Naive thymus-derived CD4-positive, alpha-beta T cell (primary cell): ENCODE measurements at regions of chr1 and their contacts with region 1.

Region 1: DNA sequence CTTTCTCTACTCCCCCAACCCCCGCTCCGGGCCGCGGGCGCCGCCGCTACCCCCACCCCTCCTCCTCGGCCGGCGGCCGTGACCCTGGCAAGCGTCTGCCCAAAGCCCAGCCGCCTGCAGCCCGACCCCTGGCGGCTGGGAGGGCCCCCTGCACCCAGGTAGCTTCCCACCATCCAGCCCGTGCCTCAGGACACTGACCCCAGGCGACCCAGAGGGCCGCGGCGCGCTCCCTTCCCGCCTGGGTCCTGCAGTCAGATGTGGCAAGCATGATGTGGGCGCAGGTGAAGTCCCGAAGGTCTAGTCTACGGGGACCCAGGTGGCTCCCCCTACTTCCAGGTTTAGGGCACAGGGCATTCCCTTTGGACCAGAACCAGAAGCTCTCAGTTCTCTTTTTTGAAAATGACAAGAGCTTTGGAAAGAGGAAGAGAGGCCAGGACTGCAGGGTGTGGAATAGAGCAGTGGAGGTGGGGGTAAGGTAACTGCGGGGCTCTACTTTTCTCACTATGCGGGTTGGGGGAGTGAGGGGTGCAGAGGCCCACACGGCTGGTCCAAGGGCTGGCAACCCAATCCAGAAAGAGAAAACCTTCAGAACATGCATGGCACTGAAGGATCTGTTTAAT is at the start of gene DENND4B:
- DNase-seq: peak; percentile 55 to 85 (median 68)
- ATAC-seq: peak; percentile 75
- H3K4me3 ChIP-seq: peak within 1 kb of the TSS; percentile 94
- H3K4me3 Mint-ChIP-seq: peak within 1 kb of the TSS; percentile 93 to 99 (median 96)
- H3K27ac ChIP-seq: peak within 1 kb of the TSS; percentile 89
- H3K27ac Mint-ChIP-seq: peak within 1 kb of the TSS; percentile 90 to 98 (median 96)
- H3K4me1 ChIP-seq: peaks cover 23 to 25% of the 10 kb centered on the region in 2 donors
- H3K4me1 Mint-ChIP-seq: peaks cover 20 to 44% (median 39%) of the 10 kb centered on the region in 7 donors
- H3K27me3 ChIP-seq: no peaks in the 10 kb centered on the region
- H3K27me3 Mint-ChIP-seq: no peaks in the 10 kb centered on the region
- total RNA-seq, gene DENND4B: 148 to 223 (median 197) TPM

Region 2: GRCh38 chr1:153339802-153340201 is 606.9 kb before region 1 on chr1:
- CTCF ChIA-PET with region 1: no interaction called
- POLR2A ChIA-PET with region 1: no interaction called
- intact Hi-C with region 1: no loop called
- DNase-seq: peak in 1 of 9 donors; percentile 22
- ATAC-seq: no peak
- H3K4me3 ChIP-seq: no peak overlapping the region
- H3K4me3 Mint-ChIP-seq: peak overlapping the region in 8 of 10 donors; percentile 7 to 63 (median 44)
- H3K27ac ChIP-seq: no peak overlapping the region
- H3K27ac Mint-ChIP-seq: peak overlapping the region in 5 of 9 donors; percentile 12 to 52 (median 32)
- H3K4me1 ChIP-seq: peaks cover 0 to 24% of the 10 kb centered on the region in 2 donors
- H3K4me1 Mint-ChIP-seq: peaks cover 20 to 50% (median 40%) of the 10 kb centered on the region in 7 donors
- H3K27me3 ChIP-seq: no peaks in the 10 kb centered on the region
- H3K27me3 Mint-ChIP-seq: peaks cover 7 to 30% (median 26%) of the 10 kb centered on the region in 5 donors

Region 3: GRCh38 chr1:153796791-153797659 is 149.7 kb before region 1 on chr1:
- CTCF ChIA-PET with region 1: interaction called, 8 read pairs
- POLR2A ChIA-PET with region 1: interaction called, 3 read pairs
- intact Hi-C with region 1: loop called (anchors 1 kb)
- DNase-seq: peak; percentile 57 to 84 (median 78)
- ATAC-seq: peak; percentile 92
- H3K4me3 ChIP-seq: no peak overlapping the region
- H3K4me3 Mint-ChIP-seq: no peak overlapping the region
- H3K27ac ChIP-seq: no peak overlapping the region
- H3K27ac Mint-ChIP-seq: peak overlapping the region in 7 of 9 donors; percentile 39 to 84 (median 65)
- H3K4me1 ChIP-seq: peaks cover 0 to 6% of the 10 kb centered on the region in 2 donors
- H3K4me1 Mint-ChIP-seq: peaks cover 4 to 17% (median 8%) of the 10 kb centered on the region in 7 donors
- H3K27me3 ChIP-seq: no peaks in the 10 kb centered on the region
- H3K27me3 Mint-ChIP-seq: no peaks in the 10 kb centered on the region

Region 4: GRCh38 chr1:153928791-153929341 is 17.9 kb before region 1 on chr1:
- CTCF ChIA-PET with region 1: interaction called, 5 read pairs
- POLR2A ChIA-PET with region 1: interaction called, 122 read pairs
- intact Hi-C with region 1: no loop called
- DNase-seq: no peak
- ATAC-seq: no peak
- H3K4me3 ChIP-seq: no peak overlapping the region
- H3K4me3 Mint-ChIP-seq: no peak overlapping the region
- H3K27ac ChIP-seq: peak overlapping the region; percentile 12
- H3K27ac Mint-ChIP-seq: peak overlapping the region; percentile 4 to 74 (median 52)
- H3K4me1 ChIP-seq: peaks cover 2 to 5% of the 10 kb centered on the region in 2 donors
- H3K4me1 Mint-ChIP-seq: peaks cover 6 to 21% (median 9%) of the 10 kb centered on the region in 7 donors
- H3K27me3 ChIP-seq: no peaks in the 10 kb centered on the region
- H3K27me3 Mint-ChIP-seq: no peaks in the 10 kb centered on the region

Region 5: DNA sequence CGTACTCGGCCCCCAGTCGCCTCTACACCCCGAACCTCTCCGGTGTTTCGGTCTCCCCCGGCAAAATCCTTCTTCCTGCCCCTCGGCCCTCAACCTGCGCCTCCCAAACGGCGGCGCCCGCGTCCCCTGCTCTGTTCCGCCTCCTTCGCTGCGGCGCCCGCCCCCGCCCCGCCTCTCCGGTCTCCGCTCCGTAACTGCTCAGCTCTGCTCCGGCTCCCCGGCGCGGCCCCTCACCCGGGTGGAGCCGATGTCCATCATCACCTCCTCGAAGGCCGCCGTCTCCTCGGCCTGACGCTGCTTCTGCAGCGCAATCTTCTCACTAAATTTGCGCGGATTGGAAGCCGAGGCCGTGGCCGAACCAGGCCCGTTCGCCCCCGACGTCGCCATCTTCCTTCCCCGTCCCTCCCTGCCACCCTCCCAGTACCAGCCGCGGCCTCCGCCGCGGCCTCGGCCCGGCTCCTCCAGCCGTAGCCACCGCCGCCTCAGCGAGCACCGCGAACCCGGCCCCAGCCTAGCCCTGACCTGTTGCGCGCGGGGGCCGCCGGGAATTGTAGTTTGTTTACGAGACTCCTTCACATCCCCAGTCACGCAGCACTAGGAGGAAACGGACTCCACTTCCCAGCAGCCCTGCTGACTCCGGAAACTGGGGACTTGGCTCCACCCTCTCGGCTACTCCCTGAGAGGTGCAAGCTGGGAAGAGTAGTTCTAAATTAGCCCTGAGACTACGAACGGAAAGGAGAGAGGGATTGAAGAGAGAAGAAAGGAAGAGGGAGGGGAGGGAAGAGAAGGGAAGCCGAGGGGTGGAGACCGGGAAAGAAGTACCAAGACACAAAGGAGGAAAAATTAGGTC is 11.6 kb after region 1 on chr1 and contains the start of gene CRTC2:
- CTCF ChIA-PET with region 1: interaction called, 36 read pairs
- POLR2A ChIA-PET with region 1: interaction called, 159 read pairs
- intact Hi-C with region 1: loop called (anchors 1 kb)
- DNase-seq: peak; percentile 86 to 99 (median 96)
- ATAC-seq: peak; percentile 94
- H3K4me3 ChIP-seq: peak within 1 kb of the TSS; percentile 74
- H3K4me3 Mint-ChIP-seq: peak within 1 kb of the TSS; percentile 91 to 100 (median 97)
- H3K27ac ChIP-seq: peak within 1 kb of the TSS; percentile 92
- H3K27ac Mint-ChIP-seq: peak within 1 kb of the TSS; percentile 89 to 98 (median 94)
- H3K4me1 ChIP-seq: peaks cover 36% of the 10 kb centered on the region in 2 donors
- H3K4me1 Mint-ChIP-seq: peaks cover 34 to 71% (median 67%) of the 10 kb centered on the region in 7 donors
- H3K27me3 ChIP-seq: no peaks in the 10 kb centered on the region
- H3K27me3 Mint-ChIP-seq: no peaks in the 10 kb centered on the region
- total RNA-seq, gene CRTC2: 86.1 to 157 (median 119) TPM

Region 6: DNA sequence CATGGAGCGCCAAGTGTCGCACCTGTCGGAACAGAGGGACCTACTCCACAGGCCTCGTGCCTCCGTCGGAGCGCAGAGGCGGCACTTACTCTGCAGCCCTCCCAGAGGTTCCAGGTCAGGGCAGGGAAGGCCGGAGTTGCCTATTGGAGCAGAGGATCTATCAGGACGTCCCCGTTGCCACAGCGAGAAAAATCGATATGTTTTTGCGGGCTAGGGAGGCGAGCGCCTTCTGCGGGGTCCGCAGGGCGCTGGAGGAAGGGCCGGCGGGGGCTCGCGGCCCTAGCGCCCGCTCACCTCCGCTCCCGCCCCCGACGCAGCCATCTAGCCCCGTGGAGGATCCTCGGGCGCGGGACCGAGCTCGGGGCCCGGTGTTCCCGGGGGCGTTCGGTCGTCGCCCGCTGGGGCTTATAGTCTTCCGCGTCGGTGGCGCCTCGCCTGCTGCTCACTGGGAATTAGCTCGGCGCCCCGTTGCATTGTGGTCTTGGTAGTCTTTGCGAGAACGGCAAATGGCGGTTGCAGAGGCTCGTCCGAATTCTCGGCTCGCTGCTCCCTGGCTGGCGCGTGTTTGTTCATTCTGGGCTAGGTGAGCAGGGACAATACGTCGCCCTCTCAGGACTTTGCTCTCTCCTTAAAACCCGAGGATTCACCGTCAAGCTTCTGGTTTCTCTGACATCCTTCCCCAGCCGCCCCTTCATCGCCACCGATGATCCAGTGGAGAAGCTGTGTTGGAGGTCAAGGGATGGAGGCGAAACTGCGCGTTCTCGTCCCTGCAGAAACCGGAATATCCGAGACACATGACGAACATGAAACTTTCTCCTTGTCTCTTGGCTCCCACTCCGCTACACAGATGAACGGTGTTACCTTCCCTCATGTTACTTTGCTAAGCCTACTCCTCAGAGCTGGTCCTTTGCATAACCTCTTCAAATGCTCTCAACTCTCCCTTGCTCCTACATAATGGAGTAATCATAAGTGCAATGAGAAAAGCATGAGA is 30.8 kb after region 1 on chr1 and contains the start of gene JTB:
- CTCF ChIA-PET with region 1: interaction called, 10 read pairs
- POLR2A ChIA-PET with region 1: interaction called, 38 read pairs
- intact Hi-C with region 1: loop called in 1 of 2 experiments (anchors 1 kb)
- DNase-seq: peak; percentile 65 to 89 (median 78)
- ATAC-seq: peak; percentile 98
- H3K4me3 ChIP-seq: peak within 1 kb of the TSS; percentile 94
- H3K4me3 Mint-ChIP-seq: peak within 1 kb of the TSS; percentile 92 to 99 (median 97)
- H3K27ac ChIP-seq: peak within 1 kb of the TSS; percentile 96
- H3K27ac Mint-ChIP-seq: peak within 1 kb of the TSS; percentile 84 to 98 (median 94)
- H3K4me1 ChIP-seq: peaks cover 9 to 15% of the 10 kb centered on the region in 2 donors
- H3K4me1 Mint-ChIP-seq: peaks cover 23 to 51% (median 40%) of the 10 kb centered on the region in 7 donors
- H3K27me3 ChIP-seq: no peaks in the 10 kb centered on the region
- H3K27me3 Mint-ChIP-seq: no peaks in the 10 kb centered on the region
- total RNA-seq, gene JTB: 78.4 to 134 (median 104) TPM

Region 7: GRCh38 chr1:154154534-154155191 is 207.9 kb after region 1 on chr1 and contains the start of gene NUP210L:
- CTCF ChIA-PET with region 1: no interaction called
- POLR2A ChIA-PET with region 1: no interaction called
- intact Hi-C with region 1: no loop called
- DNase-seq: no peak
- ATAC-seq: no peak
- H3K4me3 ChIP-seq: no peak within 1 kb of the TSS
- H3K4me3 Mint-ChIP-seq: peak within 1 kb of the TSS in 8 of 10 donors; percentile 25 to 59 (median 46)
- H3K27ac ChIP-seq: peak within 1 kb of the TSS; percentile 77
- H3K27ac Mint-ChIP-seq: peak within 1 kb of the TSS; percentile 79 to 97 (median 96)
- H3K4me1 ChIP-seq: peaks cover 29 to 64% of the 10 kb centered on the region in 2 donors
- H3K4me1 Mint-ChIP-seq: peaks cover 36 to 74% (median 60%) of the 10 kb centered on the region in 7 donors
- H3K27me3 ChIP-seq: no peaks in the 10 kb centered on the region
- H3K27me3 Mint-ChIP-seq: no peaks in the 10 kb centered on the region
- total RNA-seq, gene NUP210L: 0.11 to 0.16 (median 0.15) TPM in 4 of 5 experiments, not detected in the other